AG04450 (cell line): ENCODE measurements at regions of chr3 and their contacts with region 1.

Region 1: DNA sequence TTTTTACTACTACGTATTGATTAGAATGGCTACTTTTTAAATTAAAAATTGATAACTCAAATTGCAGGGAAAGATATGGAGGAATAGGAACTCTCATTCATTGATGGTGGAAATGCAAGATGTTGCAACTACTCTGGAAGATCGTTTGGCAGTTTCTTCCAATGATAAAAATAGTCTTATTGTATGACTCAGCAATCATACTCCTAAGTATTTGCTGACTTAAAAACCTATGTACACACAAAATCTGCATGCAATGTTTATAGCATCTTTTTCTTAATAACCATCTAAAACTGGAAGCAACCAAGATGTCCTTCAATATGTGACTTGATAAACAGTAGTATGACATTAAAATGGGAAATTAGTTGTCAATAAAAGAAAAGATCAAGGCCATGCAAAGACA is 87.4 kb upstream of the LRRC3B start:
- DNase-seq: no peak
- H3K4me3 ChIP-seq: no peak overlapping the region
- H3K27ac ChIP-seq: no peak overlapping the region
- H3K27me3 ChIP-seq: no peaks in the 10 kb centered on the region
- CTCF ChIP-seq: no peak

Region 2: DNA sequence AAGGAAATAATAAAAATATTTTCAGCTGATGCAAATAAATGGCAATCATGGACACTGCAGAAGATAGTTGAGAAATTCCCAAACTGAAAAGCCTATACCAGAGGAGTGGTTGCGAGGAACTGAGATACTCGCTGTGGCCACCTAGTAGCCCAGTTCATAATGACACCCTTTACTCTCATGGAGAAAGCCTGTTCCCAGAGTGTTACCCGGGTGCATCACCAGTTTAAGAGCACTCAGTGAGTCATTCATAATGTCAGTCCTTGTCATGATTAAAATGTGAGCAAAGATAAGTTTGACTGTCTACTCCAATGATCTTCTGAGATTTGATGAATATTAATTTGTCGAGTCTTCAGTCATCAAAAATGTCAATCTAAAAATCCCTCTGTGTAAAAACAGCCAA is 51.0 kb before region 1 on chr3:
- CTCF ChIA-PET with region 1: no interaction called
- POLR2A ChIA-PET with region 1: no interaction called
- DNase-seq: no peak
- H3K4me3 ChIP-seq: no peak overlapping the region
- H3K27ac ChIP-seq: no peak overlapping the region
- H3K27me3 ChIP-seq: no peaks in the 10 kb centered on the region
- CTCF ChIP-seq: no peak

Region 3: DNA sequence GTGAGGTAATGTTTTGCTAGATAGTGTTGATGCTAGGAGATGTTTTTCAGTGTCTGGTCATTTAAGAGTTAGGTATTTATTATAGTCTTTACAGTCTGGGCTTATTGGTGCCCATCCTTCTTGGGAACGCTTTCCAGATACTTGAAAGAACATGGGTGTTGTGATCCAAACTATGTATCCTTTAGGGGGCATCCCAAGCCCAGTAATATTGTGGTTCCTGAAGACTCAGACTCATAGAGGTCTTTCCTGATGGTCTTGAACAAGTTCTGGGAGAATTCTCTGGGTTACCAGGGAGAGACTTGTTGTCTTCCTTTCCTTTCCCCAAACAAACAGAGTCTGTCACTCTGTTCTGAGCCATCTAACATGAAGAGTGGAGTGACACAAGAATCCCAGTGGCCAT is 12.2 kb before region 1 on chr3:
- CTCF ChIA-PET with region 1: interaction called, 15 read pairs
- POLR2A ChIA-PET with region 1: no interaction called
- DNase-seq: no peak
- H3K4me3 ChIP-seq: no peak overlapping the region
- H3K27ac ChIP-seq: no peak overlapping the region
- H3K27me3 ChIP-seq: no peaks in the 10 kb centered on the region
- CTCF ChIP-seq: no peak

Region 4: DNA sequence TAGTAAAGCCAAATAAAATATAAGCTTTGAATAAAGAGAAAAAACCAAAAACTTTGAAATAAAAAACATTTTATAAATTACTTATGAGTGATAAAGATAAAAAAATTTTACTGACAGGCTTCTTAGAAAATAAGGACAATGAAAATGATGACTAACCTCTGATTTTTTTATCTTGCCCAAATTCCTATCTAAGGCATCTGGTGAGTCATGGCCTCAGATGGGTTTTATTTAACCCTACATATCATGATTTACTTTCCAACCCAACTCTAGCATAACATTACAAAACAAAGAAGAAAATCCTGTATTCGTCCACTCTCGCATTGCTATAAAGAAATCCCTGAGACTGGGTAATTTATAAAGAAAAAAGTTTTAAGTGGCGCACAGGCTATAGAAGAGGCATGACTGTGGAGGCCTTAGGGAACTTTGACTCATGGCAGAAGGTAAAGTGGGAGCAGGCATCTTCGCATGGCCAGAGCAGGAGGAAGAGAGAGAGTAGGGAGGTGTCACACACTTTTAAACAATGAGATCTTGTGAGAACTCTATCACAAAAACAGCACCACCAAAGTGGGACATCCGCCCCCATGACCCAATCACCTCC is 681.9 kb after region 1 on chr3:
- CTCF ChIA-PET with region 1: no interaction called
- POLR2A ChIA-PET with region 1: no interaction called
- DNase-seq: no peak
- H3K4me3 ChIP-seq: no peak overlapping the region
- H3K27ac ChIP-seq: no peak overlapping the region
- H3K27me3 ChIP-seq: no peaks in the 10 kb centered on the region
- CTCF ChIP-seq: no peak